CD14-positive monocyte (primary cell): ENCODE measurements at regions of chr9 and their contacts with region 1.

Region 1: DNA sequence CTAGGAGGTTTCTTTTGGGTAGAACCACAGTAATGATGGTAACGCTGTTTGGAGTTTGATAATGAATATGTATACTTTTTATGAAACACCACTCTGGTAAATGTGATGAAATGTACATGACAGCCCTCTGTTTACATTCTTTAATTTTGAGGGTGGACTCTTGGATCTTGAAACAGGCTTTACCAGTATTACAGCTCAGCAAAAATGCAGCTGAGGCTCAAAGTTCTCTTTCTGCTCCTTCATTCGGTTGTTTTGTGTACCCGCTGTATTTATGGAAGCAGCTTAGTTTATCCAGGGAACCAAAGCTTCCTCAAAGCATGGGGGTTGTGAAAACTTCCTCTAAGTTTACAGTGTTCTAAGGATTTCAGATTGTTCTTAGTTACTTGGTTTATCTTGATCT is 11.1 kb downstream of the GAPVD1 start:
- DNase-seq: peak; percentile 9 to 34 (median 13)
- H3K4me3 ChIP-seq: peak overlapping the region in 1 of 3 experiments; percentile 23
- H3K4me3 Mint-ChIP-seq: peak overlapping the region in 1 of 2 donors; percentile 35
- H3K27ac ChIP-seq: peak overlapping the region in 1 of 2 donors; percentile 73
- H3K27ac Mint-ChIP-seq: peak overlapping the region in 6 of 7 donors; percentile 19 to 79 (median 52)
- H3K4me1 ChIP-seq: peaks cover 11 to 18% of the 10 kb centered on the region in 2 donors
- H3K4me1 Mint-ChIP-seq: peaks cover 26% of the 10 kb centered on the region
- H3K27me3 ChIP-seq: no peaks in the 10 kb centered on the region
- H3K27me3 Mint-ChIP-seq: no peaks in the 10 kb centered on the region
- CTCF ChIP-seq: no peak

Region 2: GRCh38 chr9:125214186-125214585 is 58.5 kb before region 1 on chr9:
- intact Hi-C with region 1: loop called in 1 of 2 experiments (anchors 10 kb)
- DNase-seq: no peak
- H3K4me3 ChIP-seq: no peak overlapping the region
- H3K4me3 Mint-ChIP-seq: no peak overlapping the region
- H3K27ac ChIP-seq: no peak overlapping the region
- H3K27ac Mint-ChIP-seq: no peak overlapping the region
- H3K4me1 ChIP-seq: no peaks in the 10 kb centered on the region
- H3K4me1 Mint-ChIP-seq: no peaks in the 10 kb centered on the region
- H3K27me3 ChIP-seq: no peaks in the 10 kb centered on the region
- H3K27me3 Mint-ChIP-seq: peaks cover 0 to 2% (median 0%) of the 10 kb centered on the region in 3 donors
- CTCF ChIP-seq: no peak

Region 3: GRCh38 chr9:125235804-125236519 is 36.7 kb before region 1 on chr9:
- intact Hi-C with region 1: loop called in 1 of 2 experiments (anchors 5 kb)
- DNase-seq: no peak
- H3K4me3 ChIP-seq: no peak overlapping the region
- H3K4me3 Mint-ChIP-seq: peak overlapping the region in 1 of 2 donors; percentile 24
- H3K27ac ChIP-seq: no peak overlapping the region
- H3K27ac Mint-ChIP-seq: peak overlapping the region in 3 of 7 donors; percentile 1 to 63 (median 24)
- H3K4me1 ChIP-seq: peaks cover 20 to 47% of the 10 kb centered on the region in 2 donors
- H3K4me1 Mint-ChIP-seq: peaks cover 41% of the 10 kb centered on the region
- H3K27me3 ChIP-seq: no peaks in the 10 kb centered on the region
- H3K27me3 Mint-ChIP-seq: no peaks in the 10 kb centered on the region
- CTCF ChIP-seq: no peak

Region 4: DNA sequence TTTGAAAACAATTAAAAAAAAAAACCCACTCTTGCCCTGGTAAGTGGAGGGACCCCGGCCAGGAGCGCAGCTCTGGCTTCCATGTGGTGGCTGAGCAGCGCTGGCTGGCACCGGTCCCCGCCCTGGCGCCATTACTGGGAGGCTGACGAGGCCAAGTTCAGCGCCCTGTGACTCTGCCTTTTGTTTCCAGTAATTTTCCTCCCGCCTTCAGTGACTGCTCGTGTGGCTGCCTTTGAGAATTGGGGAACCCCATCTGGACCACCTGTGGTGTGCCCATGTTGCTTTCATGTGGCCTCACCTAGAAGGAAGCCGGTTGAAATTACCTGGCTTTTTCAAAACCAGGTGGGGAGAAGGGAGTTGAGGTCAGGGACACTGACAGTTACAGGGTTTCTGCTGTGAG is 125.0 kb after region 1 on chr9:
- intact Hi-C with region 1: no loop called
- DNase-seq: no peak
- H3K4me3 ChIP-seq: no peak overlapping the region
- H3K4me3 Mint-ChIP-seq: no peak overlapping the region
- H3K27ac ChIP-seq: no peak overlapping the region
- H3K27ac Mint-ChIP-seq: no peak overlapping the region
- H3K4me1 ChIP-seq: no peaks in the 10 kb centered on the region
- H3K4me1 Mint-ChIP-seq: no peaks in the 10 kb centered on the region
- H3K27me3 ChIP-seq: no peaks in the 10 kb centered on the region
- H3K27me3 Mint-ChIP-seq: peaks cover 1 to 4% (median 1%) of the 10 kb centered on the region in 3 donors
- CTCF ChIP-seq: no peak